H1 (cell line): ENCODE measurements at regions of chr5 and their contacts with region 1.

Region 1: GRCh38 chr5:73298772-73299630 is 126.0 kb downstream of the TMEM174 start:
- DNase-seq: peak in 1 of 2 experiments; percentile 77
- H3K4me3 ChIP-seq: peak overlapping the region; percentile 20 to 54 (median 32); a peak in 6 of 8 replicates
- H3K27ac ChIP-seq: no peak overlapping the region
- H3K4me1 ChIP-seq: peaks cover 12 to 19% (median 15%) of the 10 kb centered on the region in 4 experiments
- H3K27me3 ChIP-seq: peaks cover 77 to 95% (median 94%) of the 10 kb centered on the region in 4 experiments
- CTCF ChIP-seq: peak; percentile 42 to 52 (median 48)
- EP300 ChIP-seq: no peak
- POLR2A ChIP-seq: no peak
- RAD21 ChIP-seq: peak; percentile 3 to 41; a peak in 2 of 4 replicates

Region 2: DNA sequence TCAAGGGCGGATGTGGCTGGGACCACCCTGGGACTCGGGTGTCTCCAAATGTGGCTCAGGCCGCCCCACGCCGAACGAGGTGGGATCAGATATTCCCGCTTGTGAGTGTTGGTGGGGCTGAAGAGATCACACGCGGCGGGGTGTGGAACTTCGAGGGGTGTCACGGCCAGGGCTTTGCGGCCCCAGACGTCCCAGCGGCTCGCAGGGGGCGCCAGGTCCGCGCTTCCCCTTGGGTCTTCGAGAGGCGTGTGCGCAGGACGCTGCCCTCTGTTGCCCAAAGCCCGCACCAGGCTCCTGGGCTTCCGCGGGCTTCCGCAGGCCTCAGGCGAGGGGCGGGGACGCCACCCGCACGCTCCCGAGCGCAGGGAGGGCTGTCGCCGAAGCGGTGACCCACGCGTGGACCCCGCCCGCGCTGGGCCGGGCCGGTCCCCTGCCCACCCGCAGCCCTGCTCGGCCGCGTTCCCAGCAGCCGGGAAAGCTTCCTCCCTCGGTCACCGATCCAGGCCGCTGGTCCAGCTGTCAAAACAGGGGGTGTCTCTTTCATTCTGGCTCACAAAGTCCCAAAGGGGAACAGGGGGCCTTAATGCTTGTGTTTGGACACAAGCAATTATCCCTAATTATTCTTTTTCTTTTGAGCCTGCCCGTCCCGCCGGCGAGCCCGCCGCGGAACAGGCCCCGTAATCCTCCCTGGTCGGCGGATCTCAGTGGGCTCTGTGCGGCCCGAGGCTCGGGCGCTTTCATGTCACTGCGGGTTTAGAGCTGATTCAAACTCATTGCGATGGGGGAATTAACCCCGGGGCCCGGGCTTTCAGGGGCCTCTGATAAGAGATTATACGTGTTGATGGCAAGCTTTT is 65.4 kb before region 1 on chr5:
- CTCF ChIA-PET with region 1: interaction called, 17 read pairs
- POLR2A ChIA-PET with region 1: interaction called, 5 read pairs
- DNase-seq: peak in 1 of 2 experiments; percentile 76
- H3K4me3 ChIP-seq: peak overlapping the region; percentile 9 to 62 (median 40)
- H3K27ac ChIP-seq: no peak overlapping the region
- H3K4me1 ChIP-seq: peaks cover 4 to 30% (median 20%) of the 10 kb centered on the region in 4 experiments
- H3K27me3 ChIP-seq: peaks cover 55 to 82% (median 74%) of the 10 kb centered on the region in 4 experiments
- CTCF ChIP-seq: peak; percentile 28 to 30 (median 29); a peak in 3 of 4 replicates
- EP300 ChIP-seq: no peak
- POLR2A ChIP-seq: no peak
- RAD21 ChIP-seq: peak in 1 of 2 experiments; percentile 16; a peak in 1 of 4 replicates

Region 3: DNA sequence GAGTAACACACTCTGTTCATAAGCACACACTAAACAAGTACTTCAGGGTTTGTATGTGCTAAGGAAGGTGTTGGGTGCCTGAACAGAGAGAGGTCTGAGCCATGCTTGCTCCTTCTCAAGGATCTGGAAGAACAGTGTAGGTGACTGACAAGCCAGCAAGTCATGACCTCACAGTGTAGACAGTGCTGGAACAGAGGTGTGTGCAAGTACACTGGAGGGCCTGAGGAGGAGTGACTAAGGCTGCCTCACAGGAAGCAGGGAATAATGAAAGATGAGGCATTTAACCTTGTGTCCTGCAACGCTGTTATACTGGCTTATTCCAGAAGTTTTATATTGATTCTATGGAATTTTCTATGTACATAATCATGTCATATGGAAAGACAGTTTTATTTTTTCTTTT is 42.1 kb before region 1 on chr5:
- CTCF ChIA-PET with region 1: no interaction called
- POLR2A ChIA-PET with region 1: no interaction called
- DNase-seq: peak in 1 of 2 experiments; percentile 16
- H3K4me3 ChIP-seq: no peak overlapping the region
- H3K27ac ChIP-seq: no peak overlapping the region
- H3K4me1 ChIP-seq: no peaks in the 10 kb centered on the region
- H3K27me3 ChIP-seq: no peaks in the 10 kb centered on the region; a peak in 2 of 7 replicates
- CTCF ChIP-seq: no peak
- EP300 ChIP-seq: no peak
- POLR2A ChIP-seq: no peak
- RAD21 ChIP-seq: no peak

Region 4: DNA sequence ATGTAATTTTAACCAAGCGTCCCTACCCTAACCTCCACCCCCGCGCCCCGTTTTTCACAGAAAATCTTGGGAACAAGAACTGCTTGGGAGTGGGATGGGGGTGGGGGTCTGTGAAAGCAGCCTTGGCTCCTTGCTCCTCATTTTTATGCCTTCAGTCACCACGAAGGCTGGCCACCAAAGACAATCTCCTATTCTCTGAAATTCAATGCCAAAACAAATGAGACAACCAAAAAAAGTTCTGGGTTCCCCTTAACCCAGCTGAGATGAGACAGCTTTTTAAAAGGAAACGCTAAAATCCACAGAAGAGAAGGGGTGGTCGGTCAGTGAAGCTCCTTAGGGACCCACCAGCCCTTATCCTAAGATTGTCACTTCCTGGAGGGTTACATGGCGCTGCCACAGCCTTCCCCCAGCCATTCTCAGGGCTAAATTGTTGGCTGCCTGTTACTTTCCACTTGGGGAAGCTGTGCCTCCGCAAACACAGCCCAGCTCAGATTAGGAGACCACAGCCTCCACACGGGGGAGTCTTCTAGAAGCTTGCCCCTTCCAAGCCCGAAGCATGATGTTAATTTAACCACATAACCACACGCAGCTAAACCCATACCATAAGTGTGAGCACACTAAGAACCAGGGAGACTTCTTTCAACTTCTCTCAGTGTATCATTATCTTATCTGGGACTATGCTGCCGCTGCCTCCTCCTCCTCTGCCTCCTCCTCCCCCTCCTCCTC is 13.3 kb after region 1 on chr5:
- CTCF ChIA-PET with region 1: interaction called, 28 read pairs
- POLR2A ChIA-PET with region 1: no interaction called
- DNase-seq: no peak
- H3K4me3 ChIP-seq: peak overlapping the region in 1 of 4 experiments; percentile 58; a peak in 2 of 8 replicates
- H3K27ac ChIP-seq: no peak overlapping the region
- H3K4me1 ChIP-seq: peaks cover 0 to 10% (median 3%) of the 10 kb centered on the region in 4 experiments; a peak in 4 of 7 replicates
- H3K27me3 ChIP-seq: peaks cover 8 to 48% (median 39%) of the 10 kb centered on the region in 4 experiments
- CTCF ChIP-seq: peak in 2 of 3 experiments; percentile 42 to 59; a peak in 3 of 4 replicates
- EP300 ChIP-seq: no peak
- POLR2A ChIP-seq: no peak
- RAD21 ChIP-seq: peak; percentile 39 to 51; a peak in 3 of 4 replicates

Region 5: GRCh38 chr5:73321757-73322436 is 22.9 kb after region 1 on chr5:
- CTCF ChIA-PET with region 1: interaction called, 14 read pairs
- POLR2A ChIA-PET with region 1: no interaction called
- DNase-seq: no peak
- H3K4me3 ChIP-seq: no peak overlapping the region
- H3K27ac ChIP-seq: no peak overlapping the region
- H3K4me1 ChIP-seq: peaks cover 0 to 12% (median 5%) of the 10 kb centered on the region in 4 experiments; a peak in 5 of 7 replicates
- H3K27me3 ChIP-seq: peaks cover 0 to 5% (median 0%) of the 10 kb centered on the region in 4 experiments; a peak in 2 of 7 replicates
- CTCF ChIP-seq: no peak
- EP300 ChIP-seq: no peak
- POLR2A ChIP-seq: no peak
- RAD21 ChIP-seq: no peak

Region 6: DNA sequence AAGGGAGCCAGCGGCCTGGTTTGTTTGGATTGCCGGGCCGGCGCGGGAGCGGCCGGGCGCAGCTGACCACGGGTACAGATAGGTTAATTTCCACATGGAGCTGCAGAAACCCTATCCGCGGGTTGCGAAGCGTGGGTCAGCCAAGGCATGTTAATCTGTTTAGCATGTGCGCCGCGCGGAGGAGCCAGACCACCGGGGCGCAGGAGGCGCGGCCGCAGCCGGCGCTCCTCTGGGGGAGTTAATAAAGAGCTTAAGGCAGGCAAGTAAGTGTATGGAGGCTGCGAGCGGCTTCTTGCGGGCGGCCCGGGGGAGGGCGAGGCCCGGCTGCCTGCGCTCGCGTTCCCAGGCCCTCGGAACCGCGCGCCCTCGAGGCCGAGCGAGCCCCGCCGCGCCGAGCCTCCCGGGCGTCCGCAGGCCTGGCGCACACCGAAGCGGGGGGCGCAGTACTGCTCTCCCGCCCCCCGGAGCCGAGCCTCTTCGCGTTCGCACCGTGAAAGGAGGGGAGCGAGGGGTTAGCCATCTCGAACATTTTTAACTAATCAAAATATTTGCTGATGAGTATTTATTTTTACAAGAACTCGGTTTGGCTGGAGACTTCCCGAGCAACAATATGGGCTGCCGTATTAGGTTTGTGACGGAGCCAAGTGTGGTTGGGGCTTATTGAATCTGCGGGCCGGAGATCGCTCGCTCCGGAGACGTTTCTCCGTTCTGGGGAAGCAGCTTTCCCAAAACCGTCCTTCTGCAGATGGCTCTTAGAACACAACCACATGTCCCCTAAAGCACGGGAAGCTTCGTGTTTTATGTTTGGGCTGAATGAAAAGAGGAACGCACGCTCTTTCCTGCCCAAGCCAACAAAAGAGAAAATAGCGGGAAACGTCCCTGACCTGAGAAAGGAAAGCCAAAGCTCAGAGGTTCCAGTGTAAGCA is 120.7 kb after region 1 on chr5:
- CTCF ChIA-PET with region 1: interaction called, 28 read pairs
- POLR2A ChIA-PET with region 1: no interaction called
- DNase-seq: peak in 1 of 2 experiments; percentile 76
- H3K4me3 ChIP-seq: peak overlapping the region; percentile 49 to 64 (median 53)
- H3K27ac ChIP-seq: no peak overlapping the region
- H3K4me1 ChIP-seq: peaks cover 0 to 11% (median 0%) of the 10 kb centered on the region in 4 experiments; a peak in 4 of 7 replicates
- H3K27me3 ChIP-seq: peaks cover 46 to 69% (median 60%) of the 10 kb centered on the region in 4 experiments
- CTCF ChIP-seq: no peak; a peak in 1 of 4 replicates
- EP300 ChIP-seq: no peak
- POLR2A ChIP-seq: no peak
- RAD21 ChIP-seq: no peak; a peak in 1 of 4 replicates